Common myeloid progenitor, CD34-positive (primary cell): ENCODE measurements at regions of chr10 and their contacts with region 1.

Region 1: DNA sequence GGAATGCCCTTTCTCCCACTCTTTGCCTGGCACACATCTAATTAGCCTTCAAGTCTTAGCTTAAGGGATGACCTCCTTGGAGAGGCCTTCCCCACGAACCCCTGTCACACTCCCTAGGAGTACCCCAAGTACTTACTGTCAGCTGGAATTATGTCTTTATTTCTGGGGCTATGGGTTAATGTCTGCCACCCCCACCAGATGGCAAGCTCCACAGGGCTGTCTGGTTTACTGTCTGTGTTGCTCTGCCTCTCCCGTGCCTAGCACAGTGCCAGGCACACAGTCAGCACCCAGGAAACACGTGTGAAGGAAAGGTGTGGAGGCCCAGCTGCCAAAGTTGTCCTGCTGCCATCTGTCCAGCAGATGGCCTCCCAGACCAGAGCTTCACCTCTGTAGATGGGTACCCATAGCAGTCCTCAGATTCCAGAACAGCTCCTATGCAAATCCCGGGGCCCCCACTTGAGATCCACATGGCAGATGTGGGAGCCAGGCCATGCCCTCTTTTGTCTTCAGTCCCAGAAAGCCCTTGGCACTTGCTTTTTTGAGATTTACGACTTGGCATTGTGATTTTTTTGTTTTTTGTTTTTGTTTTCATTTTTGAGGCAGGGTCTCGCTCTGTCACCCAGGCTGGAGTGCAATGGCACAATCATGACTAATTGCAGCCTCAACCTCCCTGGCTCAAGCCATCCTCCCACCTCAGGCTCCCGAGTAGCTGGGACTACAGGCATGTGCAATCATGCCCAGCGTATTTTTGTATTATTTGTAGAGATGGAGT is 17.2 kb upstream of the PALD1 start:
- DNase-seq: peak in 2 of 3 donors; percentile 38 to 49
- H3K4me3 ChIP-seq: no peak overlapping the region
- H3K27ac ChIP-seq: no peak overlapping the region
- H3K4me1 ChIP-seq: peaks cover 0 to 22% (median 13%) of the 10 kb centered on the region in 4 experiments
- H3K27me3 ChIP-seq: peaks cover 2 to 44% (median 20%) of the 10 kb centered on the region in 5 experiments

Region 2: GRCh38 chr10:70478191-70479164 is 17.1 kb after region 1 on chr10 and contains the start of gene PALD1:
- CTCF ChIA-PET with region 1: interaction called, 40 read pairs
- POLR2A ChIA-PET with region 1: interaction called, 4 read pairs
- DNase-seq: peak; percentile 49 to 70 (median 59)
- H3K4me3 ChIP-seq: peak within 1 kb of the TSS; percentile 32 to 77 (median 69)
- H3K27ac ChIP-seq: no peak within 1 kb of the TSS
- H3K4me1 ChIP-seq: peaks cover 2 to 68% (median 58%) of the 10 kb centered on the region in 4 experiments
- H3K27me3 ChIP-seq: no peaks in the 10 kb centered on the region

Region 3: DNA sequence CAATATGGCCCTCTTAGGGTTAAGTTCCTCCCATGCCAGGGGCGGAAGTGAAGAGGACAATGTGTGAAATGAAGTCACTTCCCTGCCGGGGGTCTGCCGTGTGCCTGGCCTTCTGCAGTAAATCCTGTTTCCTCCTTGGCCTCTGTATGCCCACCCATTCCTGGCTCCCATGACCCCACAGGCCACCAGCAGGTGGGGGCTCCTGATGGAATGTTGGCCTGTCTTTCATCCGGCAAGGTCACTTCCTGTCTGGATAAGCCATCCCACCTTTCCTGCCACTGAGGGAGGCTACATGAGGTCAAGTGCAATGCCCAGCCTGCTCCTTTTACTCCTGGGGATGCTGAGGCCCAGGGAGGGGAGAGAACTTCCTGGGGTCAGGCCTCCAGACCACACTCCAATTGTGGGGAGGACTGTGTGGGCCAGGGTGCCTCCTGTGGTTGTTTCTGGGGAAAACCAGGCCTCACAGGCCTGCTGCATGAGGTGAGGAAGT is 39.5 kb after region 1 on chr10:
- CTCF ChIA-PET with region 1: interaction called, 16 read pairs
- POLR2A ChIA-PET with region 1: no interaction called
- DNase-seq: no peak
- H3K4me3 ChIP-seq: no peak overlapping the region
- H3K27ac ChIP-seq: no peak overlapping the region
- H3K4me1 ChIP-seq: peaks cover 0 to 47% (median 22%) of the 10 kb centered on the region in 4 experiments
- H3K27me3 ChIP-seq: no peaks in the 10 kb centered on the region

Region 4: GRCh38 chr10:70518695-70519094 is 57.3 kb after region 1 on chr10:
- CTCF ChIA-PET with region 1: interaction called, 15 read pairs
- POLR2A ChIA-PET with region 1: no interaction called
- DNase-seq: no peak
- H3K4me3 ChIP-seq: no peak overlapping the region
- H3K27ac ChIP-seq: no peak overlapping the region
- H3K4me1 ChIP-seq: peaks cover 0 to 17% (median 4%) of the 10 kb centered on the region in 4 experiments
- H3K27me3 ChIP-seq: no peaks in the 10 kb centered on the region

Region 5: DNA sequence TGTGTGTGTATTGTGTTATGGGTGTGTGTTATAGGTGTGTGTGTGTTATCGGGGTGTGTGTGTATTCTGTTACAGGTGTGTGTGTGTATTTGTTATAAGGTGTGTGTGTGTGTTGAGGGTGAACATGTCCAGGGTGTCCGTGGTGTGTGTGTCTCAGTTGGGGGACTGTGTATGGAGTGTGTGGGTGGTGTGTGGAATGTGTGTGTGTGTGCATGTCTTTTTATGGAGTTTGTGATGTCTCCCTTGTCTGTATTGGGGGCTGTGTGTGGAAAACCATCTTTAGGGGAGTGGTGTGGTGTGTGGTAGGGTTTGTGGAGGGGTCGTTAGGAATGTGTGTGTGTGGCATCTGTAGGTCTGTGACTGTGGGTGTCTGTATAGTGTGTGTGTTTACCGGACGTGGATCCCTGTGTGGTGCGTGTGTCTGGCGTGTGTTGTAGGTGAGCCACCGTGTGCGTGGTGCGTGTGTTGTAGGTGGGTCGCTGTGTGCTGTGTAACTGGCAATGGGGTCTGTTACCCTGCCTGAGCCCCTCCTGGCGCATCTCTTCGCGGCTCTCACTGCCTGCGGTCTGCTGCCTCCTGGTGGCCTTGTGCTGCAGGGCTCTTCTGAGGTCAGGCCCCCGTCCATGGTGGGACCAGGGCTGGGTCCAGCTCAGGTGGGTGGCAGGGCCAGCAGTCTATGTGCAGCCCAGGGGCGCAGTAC is 78.8 kb after region 1 on chr10:
- CTCF ChIA-PET with region 1: interaction called, 238 read pairs
- POLR2A ChIA-PET with region 1: interaction called, 3 read pairs
- DNase-seq: peak; percentile 44 to 59 (median 51)
- H3K4me3 ChIP-seq: no peak overlapping the region
- H3K27ac ChIP-seq: no peak overlapping the region
- H3K4me1 ChIP-seq: no peaks in the 10 kb centered on the region
- H3K27me3 ChIP-seq: no peaks in the 10 kb centered on the region